Ovary (tissue), 10 donors: ENCODE measurements at regions of chr2 and their contacts with region 1.

Region 1: DNA sequence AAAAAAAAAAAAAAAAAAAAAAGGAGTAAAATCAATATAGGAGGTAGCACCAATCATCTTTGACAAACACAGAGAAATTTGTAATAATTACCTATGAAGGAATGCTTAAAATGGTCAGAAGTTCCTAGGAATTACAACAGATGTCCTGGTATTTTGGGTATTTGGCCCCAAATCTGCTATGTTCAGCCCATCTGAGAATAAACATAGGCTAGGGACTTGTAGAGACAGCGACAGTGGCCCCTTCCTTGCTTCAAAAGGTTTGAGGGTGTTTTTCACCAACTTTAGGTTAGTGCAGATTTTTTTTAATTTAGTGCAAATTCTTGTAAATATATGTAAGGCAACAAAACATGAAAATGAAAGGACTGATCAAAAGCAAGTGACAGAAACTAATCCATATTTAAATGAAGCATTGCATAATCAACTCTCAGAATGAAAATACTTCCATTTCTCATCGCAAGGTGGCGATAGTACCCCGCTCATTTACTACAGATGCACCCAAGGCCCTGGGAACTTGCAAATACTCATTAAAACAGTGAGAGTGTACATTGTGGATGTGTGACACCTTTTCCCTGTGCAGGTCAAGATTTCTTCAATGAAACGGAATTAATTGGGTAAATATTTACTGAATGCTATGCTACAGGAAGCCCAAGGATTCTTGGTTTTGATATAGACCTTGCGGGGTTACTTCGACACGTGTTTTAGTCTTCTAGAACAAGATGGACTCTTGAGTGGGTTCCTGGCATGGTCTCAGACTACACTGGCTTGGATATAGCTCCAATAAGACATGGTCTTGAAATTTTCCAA is 44.6 kb downstream of the FAM124B start:
- DNase-seq: peak in 4 of 5 donors; percentile 28 to 58 (median 34)
- H3K4me3 ChIP-seq: no peak overlapping the region
- H3K27ac ChIP-seq: no peak overlapping the region
- H3K4me1 ChIP-seq: no peaks in the 10 kb centered on the region
- H3K27me3 ChIP-seq: no peaks in the 10 kb centered on the region
- CTCF ChIP-seq: peak; percentile 35 to 79 (median 59)
- EP300 ChIP-seq: no peak
- POLR2A ChIP-seq: no peak

Region 2: DNA sequence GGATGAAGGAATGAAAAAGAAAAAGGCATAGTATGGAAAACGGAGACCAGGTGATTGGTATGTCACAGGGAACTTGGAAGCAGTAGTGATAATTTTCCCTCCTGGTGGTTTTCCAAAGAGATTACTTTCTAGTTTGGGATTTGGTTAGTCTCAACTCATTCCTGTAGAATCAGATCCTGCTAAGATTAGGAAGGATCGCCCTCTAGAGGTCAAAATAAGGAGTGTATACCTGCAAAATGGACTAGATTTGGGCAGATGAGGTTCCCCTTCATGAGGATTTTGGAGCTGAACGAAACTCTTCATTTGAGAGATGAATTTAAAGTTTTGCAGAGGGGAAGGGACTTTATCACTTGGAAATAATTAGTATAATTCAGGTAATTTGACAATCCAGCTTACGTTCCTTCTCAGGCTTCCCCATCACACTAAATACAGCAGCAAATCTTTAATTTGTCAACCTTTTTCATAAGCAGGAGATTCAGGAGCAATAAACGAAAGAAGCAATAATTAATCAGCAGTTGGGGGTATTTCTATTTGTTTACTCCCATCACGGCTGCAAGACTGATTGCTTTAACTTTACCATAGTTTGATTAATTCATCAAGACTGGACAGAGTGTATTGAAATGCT is 293.6 kb after region 1 on chr2:
- intact Hi-C with region 1: loop called (anchors 2 to 5 kb)
- DNase-seq: no peak
- H3K4me3 ChIP-seq: no peak overlapping the region
- H3K27ac ChIP-seq: no peak overlapping the region
- H3K4me1 ChIP-seq: no peaks in the 10 kb centered on the region
- H3K27me3 ChIP-seq: no peaks in the 10 kb centered on the region
- CTCF ChIP-seq: peak; percentile 18 to 63 (median 42)
- EP300 ChIP-seq: no peak
- POLR2A ChIP-seq: no peak

Region 3: DNA sequence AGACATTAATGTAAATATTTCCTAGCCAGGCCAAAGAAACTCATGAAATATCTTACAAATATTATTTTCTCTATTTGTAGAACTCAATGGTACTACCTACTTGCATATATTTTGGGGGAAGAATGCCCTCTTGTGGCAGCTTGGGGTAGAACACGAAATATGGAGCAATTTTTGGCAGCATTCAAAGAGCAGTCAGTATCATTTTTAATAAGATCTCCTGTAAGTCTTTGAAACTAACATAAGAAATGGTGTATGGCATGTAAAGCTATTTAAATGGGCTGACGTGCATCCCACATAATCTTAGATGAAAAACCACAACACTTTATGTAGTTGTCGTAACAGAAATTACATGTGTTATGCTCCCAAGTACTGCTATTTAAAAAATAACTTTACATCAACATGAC is 421.2 kb after region 1 on chr2:
- intact Hi-C with region 1: loop called in 1 of 4 experiments (anchors 10 kb)
- DNase-seq: peak in 3 of 5 donors; percentile 26 to 59 (median 27)
- H3K4me3 ChIP-seq: no peak overlapping the region
- H3K27ac ChIP-seq: no peak overlapping the region
- H3K4me1 ChIP-seq: no peaks in the 10 kb centered on the region
- H3K27me3 ChIP-seq: no peaks in the 10 kb centered on the region
- CTCF ChIP-seq: peak; percentile 26 to 57 (median 49)
- EP300 ChIP-seq: no peak
- POLR2A ChIP-seq: no peak